Heart left ventricle (tissue), 16 donors: ENCODE measurements at regions of chr16 and their contacts with region 1.

Region 1: DNA sequence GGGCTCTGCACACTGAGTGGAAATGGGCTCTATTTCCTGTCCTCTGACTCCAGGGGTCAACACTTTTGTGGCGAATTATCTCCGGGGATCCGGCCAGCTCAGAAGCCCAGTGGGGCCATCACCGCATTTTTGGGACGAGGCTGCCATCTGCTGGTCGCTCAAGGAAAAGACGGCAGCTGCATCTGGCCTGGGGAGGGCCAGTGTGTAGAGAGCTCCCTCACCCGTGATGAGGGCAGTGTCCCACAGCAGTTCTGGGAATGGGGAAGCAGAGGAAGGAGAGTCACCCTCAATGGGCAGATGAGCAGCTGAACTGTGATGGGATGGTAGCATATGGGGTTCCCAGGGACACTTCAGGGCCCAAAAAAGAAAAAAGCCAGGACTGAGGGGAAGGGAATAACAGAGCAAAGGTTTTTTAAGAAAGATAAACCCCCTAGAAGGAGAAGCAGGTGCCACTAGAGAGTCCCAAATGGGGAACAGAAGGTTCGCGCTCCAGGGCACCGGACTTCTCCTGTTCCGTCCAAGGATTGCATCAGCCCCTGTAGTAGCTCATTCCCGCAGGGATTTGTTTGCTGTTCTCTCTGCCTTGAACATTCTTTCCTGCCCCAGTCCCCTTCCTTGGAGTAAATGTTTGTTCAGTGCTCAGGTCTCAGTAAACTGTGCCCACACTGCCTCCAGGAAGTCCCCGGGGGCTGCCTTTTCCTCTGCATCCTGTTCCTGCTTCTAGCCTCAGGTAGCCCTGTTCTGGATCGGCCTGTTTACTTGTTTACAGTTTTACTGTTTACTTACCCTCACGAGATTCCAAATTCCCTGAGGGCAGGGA is 9.3 kb upstream of the ABCC12 start:
- DNase-seq: peak; percentile 65 to 88 (median 77)
- ATAC-seq: peak; percentile 87 to 96 (median 94)
- H3K4me3 ChIP-seq: no peak overlapping the region
- H3K27ac ChIP-seq: no peak overlapping the region
- H3K4me1 ChIP-seq: peaks cover 0 to 15% (median 5%) of the 10 kb centered on the region in 12 donors
- H3K27me3 ChIP-seq: no peaks in the 10 kb centered on the region
- CTCF ChIP-seq: peak; percentile 76 to 94 (median 85)
- POLR2A ChIP-seq: no peak

Region 2: GRCh38 chr16:46853713-46854443 is 1311.2 kb before region 1 on chr16:
- intact Hi-C with region 1: loop called in 4 of 10 experiments (anchors 5 to 10 kb)
- DNase-seq: peak; percentile 70 to 84 (median 77)
- ATAC-seq: peak in 3 of 4 donors; percentile 79 to 89 (median 81)
- H3K4me3 ChIP-seq: no peak overlapping the region
- H3K27ac ChIP-seq: no peak overlapping the region
- H3K4me1 ChIP-seq: peaks cover 0 to 4% (median 0%) of the 10 kb centered on the region in 12 donors
- H3K27me3 ChIP-seq: no peaks in the 10 kb centered on the region
- CTCF ChIP-seq: peak; percentile 69 to 87 (median 82)
- POLR2A ChIP-seq: no peak

Region 3: GRCh38 chr16:46954562-46954961 is 1210.6 kb before region 1 on chr16:
- intact Hi-C with region 1: loop called in 5 of 10 experiments (anchors 10 kb)
- DNase-seq: no peak
- ATAC-seq: peak in 1 of 4 donors; percentile 12
- H3K4me3 ChIP-seq: no peak overlapping the region
- H3K27ac ChIP-seq: no peak overlapping the region
- H3K4me1 ChIP-seq: no peaks in the 10 kb centered on the region
- H3K27me3 ChIP-seq: no peaks in the 10 kb centered on the region
- CTCF ChIP-seq: no peak
- POLR2A ChIP-seq: no peak

Region 4: DNA sequence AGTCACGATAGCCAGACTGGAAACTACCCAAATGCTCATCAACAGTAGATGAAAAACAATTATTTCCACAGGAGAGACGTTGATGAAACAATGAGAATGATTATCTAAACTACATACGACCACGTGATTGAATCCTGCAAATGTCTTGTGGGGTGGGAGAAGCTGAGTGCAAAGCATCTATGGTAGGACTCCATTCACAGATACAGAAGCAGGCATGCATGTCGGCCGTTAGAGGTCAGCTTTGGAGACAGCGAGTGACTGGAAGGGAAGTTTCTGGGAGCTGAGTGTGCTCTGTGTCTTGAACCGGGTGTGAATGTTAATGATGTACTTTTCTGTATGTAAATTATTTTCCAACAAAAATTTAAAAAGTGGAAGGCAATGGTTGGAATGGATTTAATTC is 1120.1 kb before region 1 on chr16:
- intact Hi-C with region 1: loop called in 1 of 10 experiments (anchors 5 kb)
- DNase-seq: no peak
- ATAC-seq: no peak
- H3K4me3 ChIP-seq: no peak overlapping the region
- H3K27ac ChIP-seq: no peak overlapping the region
- H3K4me1 ChIP-seq: peaks cover 0 to 5% (median 0%) of the 10 kb centered on the region in 12 donors
- H3K27me3 ChIP-seq: no peaks in the 10 kb centered on the region
- CTCF ChIP-seq: peak in 1 of 12 donors; percentile 16
- POLR2A ChIP-seq: no peak

Region 5: DNA sequence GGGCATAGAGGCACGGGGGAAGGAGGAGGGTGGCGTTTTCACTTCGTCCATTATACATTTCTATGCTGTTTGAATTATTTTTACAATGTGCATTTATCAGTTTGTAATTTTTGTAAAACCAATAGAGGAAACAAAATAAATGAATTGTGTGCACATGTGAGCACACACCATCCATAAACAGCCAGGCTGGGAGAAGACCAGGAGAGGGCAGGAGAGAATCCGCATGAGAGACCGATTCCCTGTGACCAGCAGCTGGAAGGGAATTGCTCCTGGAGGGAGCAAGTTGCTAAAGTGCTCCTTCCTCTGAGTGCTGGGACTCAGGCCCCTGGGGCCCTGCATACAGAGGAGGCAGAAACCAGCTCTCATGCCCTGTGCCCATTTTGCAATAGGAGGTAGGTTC is 135.3 kb before region 1 on chr16:
- intact Hi-C with region 1: no loop called
- DNase-seq: no peak
- ATAC-seq: no peak
- H3K4me3 ChIP-seq: no peak overlapping the region
- H3K27ac ChIP-seq: no peak overlapping the region
- H3K4me1 ChIP-seq: no peaks in the 10 kb centered on the region
- H3K27me3 ChIP-seq: no peaks in the 10 kb centered on the region
- CTCF ChIP-seq: peak in 1 of 12 donors; percentile 5
- POLR2A ChIP-seq: no peak